ENCODE measurements at regions of chr1 and their contacts with region 1.

Region 1: DNA sequence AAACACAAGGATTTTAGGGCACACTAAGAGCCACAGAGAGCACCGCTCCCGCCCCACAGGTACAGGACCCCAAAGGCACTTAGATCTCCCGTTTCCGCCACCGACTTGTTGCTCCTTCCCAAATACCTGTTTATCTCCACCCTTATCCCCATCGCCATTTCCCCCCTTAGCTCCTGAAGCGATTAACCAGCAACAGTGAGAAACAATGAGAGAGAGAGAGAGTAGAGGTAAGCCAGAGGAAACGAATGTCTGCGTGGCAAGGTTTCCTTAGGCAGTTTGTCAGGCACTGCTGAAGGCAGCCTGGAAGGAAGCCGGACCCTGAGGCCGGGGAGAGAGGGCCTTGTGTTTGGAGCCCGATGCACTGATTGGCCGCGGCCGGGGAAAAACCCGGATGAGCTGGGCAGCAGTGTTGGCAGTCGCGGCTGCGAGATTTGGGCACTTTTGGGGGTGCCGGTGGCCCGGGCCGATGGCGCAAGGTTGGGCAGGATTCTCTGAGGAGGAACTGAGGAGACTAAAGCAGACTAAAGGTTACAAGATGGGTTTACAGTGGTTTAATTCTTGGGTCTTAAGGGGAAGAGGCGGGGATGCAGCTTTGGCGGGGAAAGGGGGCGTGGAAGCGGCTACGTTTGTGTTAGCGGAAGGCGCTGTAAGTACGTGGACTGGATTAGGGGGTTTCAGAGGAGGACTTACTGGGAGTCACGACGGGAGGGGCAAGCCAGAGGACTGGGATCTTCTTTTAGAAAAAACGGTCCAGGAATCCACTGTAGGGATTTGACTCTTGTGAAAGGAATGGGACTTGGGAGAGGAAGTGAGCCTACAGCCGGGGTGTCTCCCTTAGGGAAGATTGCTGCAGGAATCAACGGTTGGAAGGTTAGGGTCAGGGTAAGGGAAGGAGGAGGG is at the start of gene GORAB:
- DNase-seq: peak; percentile 96
- total RNA-seq, gene GORAB: 13.0 TPM

Region 2: DNA sequence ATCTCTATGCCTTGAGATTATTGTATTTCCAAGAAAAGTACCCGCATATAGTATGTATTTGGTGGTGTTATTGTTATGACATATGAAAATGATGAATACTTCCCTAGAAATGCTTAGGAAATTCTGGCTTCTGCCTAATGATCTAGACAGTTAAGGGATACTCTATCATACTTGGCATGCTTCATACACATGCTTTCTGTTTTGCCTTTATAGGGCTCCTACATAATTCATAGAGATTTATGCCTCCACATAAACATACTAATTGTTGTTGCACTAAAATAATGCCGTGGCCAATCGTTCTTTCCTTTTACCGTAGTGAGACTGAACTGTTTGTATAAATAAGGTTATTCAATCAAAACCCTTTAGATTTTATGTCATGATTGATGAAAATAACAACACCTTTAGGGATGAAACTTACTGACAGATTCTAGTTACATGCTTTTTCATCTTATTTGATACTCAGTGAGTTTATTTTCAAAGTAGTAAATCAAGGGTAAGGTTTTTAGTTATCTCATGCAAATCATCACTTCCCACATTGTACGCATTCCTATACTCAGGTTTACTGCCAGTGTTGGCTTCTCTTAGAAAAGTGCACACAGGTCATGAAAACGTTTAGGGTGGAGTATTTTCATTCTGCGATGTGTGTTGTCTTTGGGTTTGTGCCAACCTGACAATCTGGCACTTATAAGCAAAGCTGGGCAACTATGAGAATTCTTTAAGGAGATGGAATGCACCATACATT is 597.9 kb before region 1 on chr1:
- intact Hi-C with region 1: loop called (anchors 10 kb)
- DNase-seq: no peak

Region 3: DNA sequence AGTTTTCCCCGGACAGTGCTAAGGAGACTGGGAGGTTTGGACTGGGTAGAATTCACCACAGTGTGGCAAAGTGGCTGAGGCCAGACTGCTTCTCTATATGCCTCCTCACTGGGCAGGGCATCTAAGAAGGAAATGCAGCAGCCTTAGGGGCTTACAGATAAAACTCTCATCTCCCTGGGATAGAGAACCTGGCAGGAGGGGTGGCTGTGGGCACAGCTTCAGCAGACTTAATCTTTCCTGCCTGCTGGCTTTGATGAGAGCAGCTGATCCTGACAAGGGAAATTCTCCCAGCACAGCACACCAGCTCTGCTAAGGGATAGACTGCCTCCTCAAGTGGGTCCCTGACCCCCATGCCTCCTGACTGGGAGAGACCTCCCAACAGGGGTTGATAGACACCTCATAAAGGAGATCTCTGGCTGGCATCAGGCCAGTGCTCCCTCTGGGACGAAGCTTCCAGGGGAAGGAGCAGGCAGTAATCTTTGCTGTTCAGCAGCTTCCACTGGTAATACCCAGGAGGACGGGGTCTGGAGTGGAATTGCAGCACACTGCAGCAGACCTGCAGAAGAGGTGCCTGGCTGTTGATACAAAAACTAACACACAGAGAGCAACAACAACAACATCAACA is 482.7 kb before region 1 on chr1:
- intact Hi-C with region 1: loop called (anchors 10 kb)
- DNase-seq: no peak

Region 4: DNA sequence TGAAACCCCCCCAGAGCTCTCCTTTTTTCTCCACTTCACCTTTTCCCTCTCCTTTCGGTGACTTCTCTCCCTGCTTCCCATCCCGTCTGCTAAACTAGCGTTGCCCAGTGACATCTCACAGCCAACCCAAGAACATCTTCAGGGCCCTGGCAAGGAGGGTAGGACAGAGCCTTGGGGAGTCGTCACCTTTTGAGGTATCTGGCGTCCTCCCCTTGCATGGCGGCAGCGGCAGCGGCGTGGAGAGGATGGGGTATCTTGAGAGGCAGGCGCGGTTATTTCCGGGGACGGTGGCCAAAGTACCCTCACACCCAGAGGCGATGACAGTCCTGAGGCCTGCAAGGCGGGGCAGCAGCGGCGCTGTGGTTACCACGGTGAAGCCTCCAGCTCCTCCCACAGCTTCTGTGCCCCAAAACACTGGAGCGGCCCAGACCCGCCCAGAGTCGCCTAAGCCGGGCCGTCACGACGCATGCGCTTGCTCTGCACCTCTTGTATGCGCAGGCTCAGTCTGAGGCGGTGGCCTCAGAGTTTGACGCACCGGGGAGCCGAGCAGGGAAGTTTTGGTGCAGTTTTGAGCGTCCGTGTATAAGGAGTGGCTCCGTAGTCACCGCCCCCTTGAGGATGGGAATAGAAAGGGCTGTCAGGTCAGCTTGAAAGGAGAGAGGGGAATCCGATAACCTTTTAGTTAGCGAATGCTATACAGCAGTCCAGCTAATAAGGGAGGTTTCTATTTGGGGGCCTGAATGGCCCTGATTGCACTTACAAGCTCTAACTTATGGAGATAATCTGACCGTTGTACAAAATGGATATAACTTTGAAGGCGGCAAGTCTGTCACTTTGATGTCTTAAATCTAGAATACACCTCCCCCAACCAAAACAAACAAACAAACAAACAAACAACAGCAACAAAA is 457.5 kb before region 1 on chr1 and contains the start of gene KIFAP3:
- intact Hi-C with region 1: loop called (anchors 10 kb)
- DNase-seq: peak; percentile 98
- total RNA-seq, gene KIFAP3: 81.0 TPM

Region 5: DNA sequence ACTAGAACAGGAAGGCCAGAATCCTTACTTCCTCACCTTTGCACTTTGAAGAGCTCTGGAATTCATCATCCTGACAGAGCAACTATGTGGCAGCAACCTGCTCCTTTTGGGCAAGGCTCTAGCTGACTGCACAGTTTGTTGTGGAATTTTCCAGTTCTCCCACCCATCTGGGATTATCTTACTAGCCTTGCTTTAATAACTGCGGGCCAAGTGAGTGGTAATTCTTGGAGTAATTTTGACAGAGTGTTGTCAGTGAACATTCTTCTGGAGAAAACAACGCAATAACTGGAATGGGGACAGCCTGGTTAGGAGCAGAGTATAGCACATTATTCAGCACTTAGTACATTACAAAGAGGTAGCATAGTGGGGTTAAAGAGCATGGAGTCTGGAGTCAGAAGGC is 311.0 kb before region 1 on chr1:
- intact Hi-C with region 1: loop called (anchors 10 kb)
- DNase-seq: no peak

Region 6: GRCh38 chr1:170410401-170411166 is 121.4 kb before region 1 on chr1:
- intact Hi-C with region 1: loop called (anchors 5 kb)
- DNase-seq: no peak

Region 7: GRCh38 chr1:170426596-170426995 is 105.4 kb before region 1 on chr1:
- intact Hi-C with region 1: no loop called
- DNase-seq: no peak

Region 8: GRCh38 chr1:170494369-170494768 is 37.6 kb before region 1 on chr1:
- intact Hi-C with region 1: loop called (anchors 5 kb)
- DNase-seq: no peak